ENCODE measurements at regions of chr3 and their contacts with region 1.

Region 1: DNA sequence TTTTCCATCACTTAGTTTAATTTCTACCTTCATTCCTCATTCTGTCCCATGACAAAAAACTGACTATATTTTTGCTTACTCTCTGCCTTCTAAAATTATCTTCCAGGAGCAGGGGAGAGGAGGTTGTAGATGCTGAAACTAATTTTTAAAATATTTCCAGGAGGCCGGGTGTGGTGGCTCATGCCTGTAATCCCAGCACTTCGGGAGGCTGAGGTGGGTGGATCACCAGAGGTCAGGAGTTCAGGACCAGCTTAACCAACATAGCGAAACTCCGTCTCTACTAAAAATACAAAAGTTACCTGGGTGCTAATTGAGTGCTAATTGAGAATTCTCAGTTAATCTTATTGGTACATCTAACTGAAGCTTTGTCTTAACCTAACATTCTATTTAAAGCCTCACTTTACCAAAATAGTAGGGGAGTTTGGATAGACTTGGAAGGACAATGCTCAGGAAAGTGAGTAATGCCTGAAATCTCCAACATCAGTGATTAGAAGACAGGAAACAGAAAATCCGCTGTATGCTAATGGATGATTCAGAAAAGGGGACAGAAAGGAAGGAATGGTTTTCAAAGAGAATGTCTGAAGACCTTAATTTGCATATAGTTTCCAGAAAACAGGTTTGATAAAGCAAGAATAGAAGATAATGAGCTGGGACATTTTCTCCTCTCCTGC is 336.1 kb downstream of the GBE1 start:
- DNase-seq: no peak
- ATAC-seq: no peak
- H3K4me3 ChIP-seq: no peak overlapping the region
- H3K27ac ChIP-seq: no peak overlapping the region
- H3K4me1 ChIP-seq: no peaks in the 10 kb centered on the region
- H3K27me3 ChIP-seq: no peaks in the 10 kb centered on the region

Region 2: DNA sequence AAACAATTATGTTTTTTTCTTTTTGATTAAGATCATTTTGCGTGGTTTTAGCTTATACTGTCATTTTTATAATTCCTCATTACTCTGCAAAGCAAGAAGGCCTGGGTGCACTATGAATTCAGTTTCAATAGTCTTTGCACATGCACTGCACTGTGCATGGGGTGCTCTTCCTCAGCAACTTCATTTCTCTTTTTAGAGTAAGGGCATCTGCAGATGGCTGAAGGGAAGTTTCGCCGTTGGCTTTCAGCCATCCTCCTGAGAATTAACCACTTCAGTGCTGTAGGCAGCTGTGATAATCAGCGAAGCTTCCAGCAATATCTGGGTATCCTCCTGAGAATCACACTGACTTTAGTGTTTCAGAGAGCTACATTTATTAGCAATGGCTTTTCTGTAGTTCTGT is 51.4 kb after region 1 on chr3:
- intact Hi-C with region 1: no loop called
- DNase-seq: no peak
- ATAC-seq: no peak
- H3K4me3 ChIP-seq: no peak overlapping the region
- H3K27ac ChIP-seq: no peak overlapping the region
- H3K4me1 ChIP-seq: peaks cover 0 to 1% of the 10 kb centered on the region in 2 donors
- H3K27me3 ChIP-seq: no peaks in the 10 kb centered on the region

Region 3: GRCh38 chr3:81643721-81644120 is 218.4 kb after region 1 on chr3:
- intact Hi-C with region 1: loop called in 1 of 2 experiments (anchors 10 kb)
- DNase-seq: no peak
- ATAC-seq: no peak
- H3K4me3 ChIP-seq: no peak overlapping the region
- H3K27ac ChIP-seq: no peak overlapping the region
- H3K4me1 ChIP-seq: no peaks in the 10 kb centered on the region
- H3K27me3 ChIP-seq: no peaks in the 10 kb centered on the region

Measured in aorta (tissue), 5 donors.